Testis (tissue), 5 donors: ENCODE measurements at regions of chr5 and their contacts with region 1.

Region 1: DNA sequence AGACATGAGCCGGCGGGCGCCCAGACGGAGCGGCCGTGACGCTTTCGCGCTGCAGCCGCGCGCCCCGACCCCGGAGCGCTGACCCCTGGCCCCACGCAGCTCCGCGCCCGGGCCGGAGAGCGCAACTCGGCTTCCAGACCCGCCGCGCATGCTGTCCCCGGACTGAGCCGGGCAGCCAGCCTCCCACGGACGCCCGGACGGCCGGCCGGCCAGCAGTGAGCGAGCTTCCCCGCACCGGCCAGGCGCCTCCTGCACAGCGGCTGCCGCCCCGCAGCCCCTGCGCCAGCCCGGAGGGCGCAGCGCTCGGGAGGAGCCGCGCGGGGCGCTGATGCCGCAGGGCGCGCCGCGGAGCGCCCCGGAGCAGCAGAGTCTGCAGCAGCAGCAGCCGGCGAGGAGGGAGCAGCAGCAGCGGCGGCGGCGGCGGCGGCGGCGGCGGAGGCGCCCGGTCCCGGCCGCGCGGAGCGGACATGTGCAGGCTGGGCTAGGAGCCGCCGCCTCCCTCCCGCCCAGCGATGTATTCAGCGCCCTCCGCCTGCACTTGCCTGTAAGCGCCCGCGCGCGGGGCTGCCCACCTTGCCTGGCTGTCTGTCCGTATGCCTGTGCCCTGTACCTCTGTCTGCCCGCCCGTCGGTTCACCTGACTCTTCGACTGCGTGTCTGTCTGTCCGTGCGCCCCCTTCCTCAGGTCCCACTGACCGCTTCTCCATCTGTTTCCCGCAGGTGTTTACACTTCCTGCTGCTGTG is 412 bp downstream of the FGF18 start:
- DNase-seq: peak; percentile 32
- H3K4me3 ChIP-seq: peak overlapping the region; percentile 42 to 49
- H3K27ac ChIP-seq: no peak overlapping the region
- H3K4me1 ChIP-seq: peaks cover 20% of the 10 kb centered on the region
- H3K27me3 ChIP-seq: no peaks in the 10 kb centered on the region
- CTCF ChIP-seq: no peak
- POLR2A ChIP-seq: no peak

Region 2: GRCh38 chr5:171647032-171647903 is 227.4 kb after region 1 on chr5:
- intact Hi-C with region 1: no loop called
- DNase-seq: no peak
- H3K4me3 ChIP-seq: no peak overlapping the region
- H3K27ac ChIP-seq: no peak overlapping the region
- H3K4me1 ChIP-seq: no peaks in the 10 kb centered on the region
- H3K27me3 ChIP-seq: no peaks in the 10 kb centered on the region
- CTCF ChIP-seq: no peak
- POLR2A ChIP-seq: no peak

Region 3: DNA sequence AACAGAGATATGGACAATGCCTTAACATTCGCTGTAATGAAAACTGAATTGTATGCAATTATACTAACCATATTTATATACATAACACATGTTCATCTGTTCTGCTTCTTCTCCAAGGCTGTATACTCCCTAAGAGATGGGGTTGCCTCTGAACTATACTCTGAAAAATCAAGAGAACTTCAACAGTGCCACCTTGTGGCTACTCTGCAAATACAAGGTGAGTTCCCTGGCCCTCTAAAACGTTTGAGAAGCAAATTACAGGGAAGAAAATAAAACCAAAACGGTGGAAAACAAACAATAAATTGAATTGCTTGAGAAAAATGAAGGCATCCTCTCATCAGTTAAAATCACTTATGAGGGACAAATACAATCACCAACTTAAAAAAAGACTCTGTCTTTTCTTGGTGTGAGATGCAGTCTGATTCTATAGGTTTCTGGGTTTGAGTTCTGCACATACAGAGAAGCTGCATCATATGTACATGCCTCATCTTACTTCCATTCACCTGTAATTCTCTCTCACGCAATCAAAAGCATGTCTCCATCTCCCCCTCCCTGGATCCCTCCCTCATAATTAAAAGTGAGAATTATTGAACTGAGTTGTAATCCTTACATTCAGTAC is 488.0 kb after region 1 on chr5:
- intact Hi-C with region 1: loop called (anchors 10 kb)
- DNase-seq: peak; percentile 59
- H3K4me3 ChIP-seq: no peak overlapping the region
- H3K27ac ChIP-seq: no peak overlapping the region
- H3K4me1 ChIP-seq: peaks cover 3% of the 10 kb centered on the region
- H3K27me3 ChIP-seq: no peaks in the 10 kb centered on the region
- CTCF ChIP-seq: peak; percentile 60 to 76 (median 68)
- POLR2A ChIP-seq: no peak